GM12878 (cell line): ENCODE measurements at regions of chr6 and their contacts with region 1.

Region 1: GRCh38 chr6:52263709-52264540 is 19.6 kb upstream of the IL17F start:
- DNase-seq: no peak
- ATAC-seq: peak; percentile 92
- H3K4me3 ChIP-seq: no peak overlapping the region
- H3K27ac ChIP-seq: no peak overlapping the region
- H3K4me1 ChIP-seq: no peaks in the 10 kb centered on the region
- H3K27me3 ChIP-seq: no peaks in the 10 kb centered on the region
- CTCF ChIP-seq: peak; percentile 91 to 97 (median 96); a peak in 5 of 6 replicates
- EP300 ChIP-seq: no peak
- POLR2A ChIP-seq: 0 out of 2 replicates have a peak, but pooled peaks have one; percentile 23
- RAD21 ChIP-seq: peak; percentile 94

Region 2: GRCh38 chr6:51830666-51831065 is 433.3 kb before region 1 on chr6:
- CTCF ChIA-PET with region 1: no interaction called
- POLR2A ChIA-PET with region 1: no interaction called
- RAD21 ChIA-PET with region 1: no interaction called
- SMC1A ChIA-PET with region 1: no interaction called
- in situ Hi-C with region 1: no loop called
- intact Hi-C with region 1: no loop called
- DNase-seq: no peak
- ATAC-seq: no peak
- H3K4me3 ChIP-seq: no peak overlapping the region
- H3K27ac ChIP-seq: no peak overlapping the region
- H3K4me1 ChIP-seq: no peaks in the 10 kb centered on the region
- H3K27me3 ChIP-seq: no peaks in the 10 kb centered on the region
- CTCF ChIP-seq: no peak
- EP300 ChIP-seq: no peak
- POLR2A ChIP-seq: no peak
- RAD21 ChIP-seq: no peak

Region 3: DNA sequence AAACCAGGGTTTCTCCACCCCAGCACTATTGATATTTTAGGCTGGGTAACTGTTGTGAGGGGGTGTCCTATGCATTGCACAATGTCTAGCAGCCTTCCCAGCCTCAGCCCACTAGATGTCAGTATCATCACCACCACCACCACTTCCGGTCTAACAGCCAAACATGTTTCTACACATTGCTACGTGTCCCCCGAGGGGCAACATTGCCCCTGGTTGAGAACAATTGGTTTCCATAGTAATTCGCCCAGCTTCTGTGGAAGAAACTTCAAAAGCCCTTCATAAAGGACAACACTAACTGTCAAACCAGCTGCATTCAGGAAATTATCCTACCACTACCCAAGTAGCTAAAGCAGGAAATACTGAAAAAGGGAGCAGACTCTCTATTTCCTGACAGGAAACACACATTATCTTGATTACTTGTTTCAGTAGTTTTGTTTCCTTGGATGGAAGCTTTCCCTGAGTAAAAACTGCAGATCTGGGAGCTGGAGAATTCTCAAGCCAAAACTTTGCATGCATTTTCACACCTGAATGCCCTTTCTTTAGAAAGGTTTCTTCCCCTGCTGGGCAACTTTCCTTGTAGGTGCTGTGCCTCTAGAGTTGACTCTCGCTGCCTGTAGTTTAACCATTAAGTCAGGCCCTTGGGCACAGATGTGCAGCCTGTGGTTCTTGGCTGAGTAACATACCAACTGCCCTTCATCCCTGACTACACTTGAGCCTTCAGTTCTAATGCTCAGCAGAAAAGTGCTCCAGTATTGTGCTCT is 200.2 kb before region 1 on chr6:
- CTCF ChIA-PET with region 1: interaction called, 14 read pairs
- POLR2A ChIA-PET with region 1: no interaction called
- RAD21 ChIA-PET with region 1: no interaction called
- SMC1A ChIA-PET with region 1: interaction called, 8 read pairs
- in situ Hi-C with region 1: no loop called
- intact Hi-C with region 1: loop called (anchors 2 kb)
- DNase-seq: peak; percentile 42
- ATAC-seq: peak; percentile 99
- H3K4me3 ChIP-seq: no peak overlapping the region
- H3K27ac ChIP-seq: no peak overlapping the region; the same call in 1 of the 2 replicates
- H3K4me1 ChIP-seq: peaks cover 4% of the 10 kb centered on the region
- H3K27me3 ChIP-seq: 0 out of 4 replicates have a peak, but pooled peaks cover 0 to 4% of the 10 kb centered on the region in 2 experiments
- CTCF ChIP-seq: peak; percentile 59 to 68 (median 64)
- EP300 ChIP-seq: no peak
- POLR2A ChIP-seq: no peak
- RAD21 ChIP-seq: peak; percentile 52

Region 4: DNA sequence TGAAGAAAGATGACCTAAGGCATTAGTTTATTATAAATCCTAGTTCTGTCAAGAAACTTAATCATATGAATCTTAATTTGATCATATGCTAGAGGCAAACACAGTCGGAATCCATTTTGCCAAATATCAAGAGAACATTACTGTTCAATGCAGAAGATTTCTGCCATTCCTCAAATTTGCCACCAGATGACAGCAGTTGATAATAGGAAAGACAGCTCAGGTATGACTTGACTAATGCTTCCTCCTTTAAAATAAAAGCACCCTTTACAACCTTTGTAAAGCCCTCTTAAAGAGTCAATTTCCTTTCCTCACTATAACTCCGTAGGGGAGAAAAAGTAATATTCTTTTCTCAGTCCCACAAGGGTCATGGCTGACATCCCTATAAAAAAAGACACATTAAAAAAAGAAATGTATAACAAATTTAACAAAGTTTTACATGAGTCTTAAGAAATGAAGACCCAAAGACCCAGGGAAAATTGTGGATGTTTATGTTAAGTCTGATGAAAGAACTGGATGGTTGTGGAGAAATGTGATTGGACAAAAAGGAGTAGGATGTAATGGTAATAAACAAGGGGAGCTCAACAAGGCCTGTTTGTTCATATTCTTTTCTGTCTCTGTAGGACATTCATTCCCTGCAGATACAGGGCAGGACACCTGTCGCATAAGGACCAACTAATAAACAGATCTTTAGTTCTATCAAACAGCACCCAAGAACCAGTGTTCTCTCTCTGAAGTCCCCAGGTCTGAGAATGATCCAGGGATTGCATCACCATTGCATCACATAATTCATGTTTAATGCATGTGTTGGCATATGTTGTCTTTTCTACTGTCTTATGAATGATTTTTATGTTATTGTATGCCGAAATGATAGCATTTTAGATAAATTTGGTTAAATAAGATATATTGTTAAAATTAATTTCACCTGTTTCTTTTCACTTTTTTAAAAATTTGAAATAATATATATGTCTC is 100.7 kb before region 1 on chr6:
- CTCF ChIA-PET with region 1: interaction called, 129 read pairs
- POLR2A ChIA-PET with region 1: no interaction called
- RAD21 ChIA-PET with region 1: interaction called, 51 read pairs
- SMC1A ChIA-PET with region 1: interaction called, 91 read pairs
- in situ Hi-C with region 1: loop called (anchors 5 kb)
- intact Hi-C with region 1: loop called (anchors 1 kb)
- DNase-seq: no peak
- ATAC-seq: peak; percentile 92
- H3K4me3 ChIP-seq: no peak overlapping the region
- H3K27ac ChIP-seq: no peak overlapping the region
- H3K4me1 ChIP-seq: peaks cover 9% of the 10 kb centered on the region; the same call in 1 of the 2 replicates
- H3K27me3 ChIP-seq: no peaks in the 10 kb centered on the region
- CTCF ChIP-seq: peak; percentile 84 to 95 (median 91)
- EP300 ChIP-seq: no peak
- POLR2A ChIP-seq: no peak
- RAD21 ChIP-seq: peak; percentile 100

Region 5: DNA sequence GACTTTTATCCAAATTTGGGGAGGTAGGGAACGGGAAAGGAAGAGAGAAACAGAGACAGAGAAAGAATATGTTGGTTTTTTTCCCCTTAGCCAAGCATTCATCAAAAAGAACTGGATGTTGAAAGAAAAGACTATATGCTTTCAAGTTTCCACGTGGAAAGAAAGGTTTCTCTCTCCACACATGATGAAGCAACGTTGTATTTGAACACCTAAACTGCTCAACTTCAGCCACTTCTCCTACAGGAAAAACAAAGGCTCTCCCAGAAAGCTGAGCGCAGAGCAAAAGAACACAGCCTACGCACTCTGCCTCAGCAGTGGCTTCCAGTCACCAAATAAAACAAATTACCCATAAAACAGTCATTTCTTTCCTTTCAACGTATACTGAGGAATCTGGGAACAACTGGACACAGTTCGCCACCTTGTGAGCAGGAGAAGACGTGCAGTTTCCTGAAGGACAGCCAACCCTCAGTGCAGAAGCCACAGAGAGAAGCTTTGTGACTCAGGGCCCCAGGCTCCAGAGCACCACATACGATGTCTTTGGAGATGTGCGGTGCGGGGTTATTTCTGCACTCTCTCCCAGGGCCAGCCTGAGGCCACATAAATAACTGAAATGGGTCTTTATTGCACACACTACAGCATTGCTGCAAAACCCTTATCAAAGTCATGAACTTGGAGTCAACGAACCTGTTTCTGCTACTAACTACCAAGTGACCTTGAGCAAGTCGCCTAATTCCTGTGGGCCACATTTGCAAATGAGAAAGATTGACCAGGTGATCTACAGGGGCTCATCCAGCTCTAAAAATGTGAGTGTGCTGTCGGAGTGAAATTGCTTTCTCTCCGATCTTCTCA is 29.7 kb before region 1 on chr6:
- CTCF ChIA-PET with region 1: interaction called, 24 read pairs
- POLR2A ChIA-PET with region 1: no interaction called
- RAD21 ChIA-PET with region 1: interaction called, 3 read pairs
- SMC1A ChIA-PET with region 1: interaction called, 11 read pairs
- in situ Hi-C with region 1: no loop called
- intact Hi-C with region 1: loop called (anchors 2 kb)
- DNase-seq: no peak
- ATAC-seq: peak; percentile 81
- H3K4me3 ChIP-seq: no peak overlapping the region
- H3K27ac ChIP-seq: no peak overlapping the region
- H3K4me1 ChIP-seq: peaks cover 9% of the 10 kb centered on the region
- H3K27me3 ChIP-seq: peaks cover 0 to 2% of the 10 kb centered on the region in 2 experiments; a peak in 2 of 4 replicates
- CTCF ChIP-seq: peak; percentile 71 to 78 (median 75)
- EP300 ChIP-seq: no peak
- POLR2A ChIP-seq: no peak
- RAD21 ChIP-seq: peak; percentile 93

Region 6: GRCh38 chr6:52243282-52243893 is 20.5 kb before region 1 on chr6:
- CTCF ChIA-PET with region 1: interaction called, 13 read pairs
- POLR2A ChIA-PET with region 1: no interaction called
- RAD21 ChIA-PET with region 1: no interaction called
- SMC1A ChIA-PET with region 1: interaction called, 5 read pairs
- in situ Hi-C with region 1: no loop called
- intact Hi-C with region 1: no loop called
- DNase-seq: no peak
- ATAC-seq: no peak
- H3K4me3 ChIP-seq: no peak overlapping the region
- H3K27ac ChIP-seq: no peak overlapping the region
- H3K4me1 ChIP-seq: no peaks in the 10 kb centered on the region
- H3K27me3 ChIP-seq: peaks cover 2 to 5% of the 10 kb centered on the region in 2 experiments; a peak in 1 of 4 replicates
- CTCF ChIP-seq: no peak
- EP300 ChIP-seq: no peak
- POLR2A ChIP-seq: no peak
- RAD21 ChIP-seq: no peak

Region 7: GRCh38 chr6:52249078-52249477 is 14.8 kb before region 1 on chr6:
- CTCF ChIA-PET with region 1: interaction called, 21 read pairs
- POLR2A ChIA-PET with region 1: interaction called, 3 read pairs
- RAD21 ChIA-PET with region 1: interaction called, 5 read pairs
- SMC1A ChIA-PET with region 1: interaction called, 6 read pairs
- in situ Hi-C with region 1: no loop called
- intact Hi-C with region 1: no loop called
- DNase-seq: no peak
- ATAC-seq: no peak
- H3K4me3 ChIP-seq: no peak overlapping the region
- H3K27ac ChIP-seq: no peak overlapping the region
- H3K4me1 ChIP-seq: peaks cover 6% of the 10 kb centered on the region
- H3K27me3 ChIP-seq: no peaks in the 10 kb centered on the region; a peak in 2 of 4 replicates
- CTCF ChIP-seq: no peak
- EP300 ChIP-seq: no peak
- POLR2A ChIP-seq: no peak
- RAD21 ChIP-seq: no peak